ENCODE measurements at regions of chr9 and their contacts with region 1.

Region 1: DNA sequence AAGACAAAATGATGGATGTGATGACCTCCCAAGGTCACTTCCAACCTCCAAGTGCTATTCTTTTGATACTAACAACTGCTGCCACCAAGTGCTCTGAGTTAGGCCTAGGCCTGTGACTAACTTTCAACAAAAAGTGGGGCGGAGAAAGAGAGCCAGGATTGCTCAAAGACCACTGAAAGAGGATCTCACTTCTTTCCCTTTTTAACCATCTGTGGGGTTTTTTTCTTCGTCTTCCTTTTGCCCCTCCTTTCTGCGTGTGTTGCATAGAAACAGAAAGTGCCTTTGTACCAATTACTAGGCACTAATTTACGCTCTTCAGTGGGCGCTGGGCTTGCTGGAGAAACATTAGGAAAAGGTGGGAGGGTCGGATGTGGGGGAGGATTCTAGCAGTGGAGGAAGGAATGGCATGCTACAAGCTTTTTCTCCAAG is 8.0 kb downstream of the KLF9 start:
- DNase-seq: peak in 1 of 5 donors; percentile 44
- H3K4me3 ChIP-seq: peak overlapping the region; percentile 1
- H3K4me3 Mint-ChIP-seq: peak overlapping the region; percentile 61 to 84 (median 82)
- H3K27ac ChIP-seq: no peak overlapping the region
- H3K27ac Mint-ChIP-seq: peak overlapping the region in 7 of 8 donors; percentile 72 to 97 (median 94)
- H3K4me1 ChIP-seq: peaks cover 69% of the 10 kb centered on the region
- H3K4me1 Mint-ChIP-seq: peaks cover 78 to 89% (median 89%) of the 10 kb centered on the region in 3 donors
- H3K27me3 ChIP-seq: no peaks in the 10 kb centered on the region
- H3K27me3 Mint-ChIP-seq: peaks cover 0 to 1% of the 10 kb centered on the region in 2 donors

Region 2: DNA sequence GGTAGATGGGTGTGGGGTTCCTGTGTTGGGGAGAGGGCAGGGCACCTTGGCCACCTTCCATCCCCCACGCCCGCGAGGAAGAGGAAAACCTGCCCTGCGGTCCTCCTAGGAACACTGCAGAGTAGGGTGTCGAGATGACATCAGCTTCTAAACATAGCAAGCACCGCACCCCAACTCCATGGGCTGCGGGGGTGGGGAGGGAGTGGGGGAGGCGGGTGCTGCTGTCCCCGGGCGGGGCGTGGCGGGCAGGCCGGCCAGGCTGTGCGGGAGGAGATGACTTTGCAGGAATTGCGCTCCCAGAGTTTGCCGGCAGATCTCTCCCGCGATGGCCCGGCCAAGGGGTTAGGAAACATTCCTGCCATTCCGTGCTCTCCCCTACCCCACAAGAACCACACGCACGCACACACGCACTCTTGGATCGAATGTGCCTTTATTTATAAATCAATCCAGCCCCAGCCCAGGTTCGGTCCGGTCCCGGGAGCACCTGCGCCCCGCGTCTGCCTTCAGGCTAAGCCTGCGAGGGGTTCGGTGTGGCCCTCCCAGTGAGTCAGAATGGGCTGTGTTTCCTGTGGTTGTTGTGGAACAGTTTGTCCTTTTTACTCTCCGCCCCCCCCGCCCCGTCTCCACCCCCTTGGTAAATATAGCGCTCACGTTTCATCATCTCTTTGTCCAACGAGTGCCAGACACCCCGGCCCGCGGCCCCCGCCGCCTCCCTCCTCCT is 13.3 kb after region 1 on chr9:
- CTCF ChIA-PET with region 1: interaction called, 9 read pairs
- POLR2A ChIA-PET with region 1: interaction called, 18 read pairs
- DNase-seq: peak; percentile 83 to 93 (median 85)
- H3K4me3 ChIP-seq: peak overlapping the region; percentile 90
- H3K4me3 Mint-ChIP-seq: peak overlapping the region; percentile 93 to 98 (median 96)
- H3K27ac ChIP-seq: peak overlapping the region; percentile 96
- H3K27ac Mint-ChIP-seq: peak overlapping the region; percentile 97 to 100 (median 98)
- H3K4me1 ChIP-seq: peaks cover 44% of the 10 kb centered on the region
- H3K4me1 Mint-ChIP-seq: peaks cover 45 to 58% (median 55%) of the 10 kb centered on the region in 3 donors
- H3K27me3 ChIP-seq: no peaks in the 10 kb centered on the region
- H3K27me3 Mint-ChIP-seq: peaks cover 0 to 2% of the 10 kb centered on the region in 2 donors

Measured in CD8-positive, alpha-beta memory T cell (primary cell).